HCT116 (cell line): ENCODE measurements at regions of chr5 and their contacts with region 1.

Region 1: DNA sequence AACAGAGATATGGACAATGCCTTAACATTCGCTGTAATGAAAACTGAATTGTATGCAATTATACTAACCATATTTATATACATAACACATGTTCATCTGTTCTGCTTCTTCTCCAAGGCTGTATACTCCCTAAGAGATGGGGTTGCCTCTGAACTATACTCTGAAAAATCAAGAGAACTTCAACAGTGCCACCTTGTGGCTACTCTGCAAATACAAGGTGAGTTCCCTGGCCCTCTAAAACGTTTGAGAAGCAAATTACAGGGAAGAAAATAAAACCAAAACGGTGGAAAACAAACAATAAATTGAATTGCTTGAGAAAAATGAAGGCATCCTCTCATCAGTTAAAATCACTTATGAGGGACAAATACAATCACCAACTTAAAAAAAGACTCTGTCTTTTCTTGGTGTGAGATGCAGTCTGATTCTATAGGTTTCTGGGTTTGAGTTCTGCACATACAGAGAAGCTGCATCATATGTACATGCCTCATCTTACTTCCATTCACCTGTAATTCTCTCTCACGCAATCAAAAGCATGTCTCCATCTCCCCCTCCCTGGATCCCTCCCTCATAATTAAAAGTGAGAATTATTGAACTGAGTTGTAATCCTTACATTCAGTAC is 98.6 kb downstream of the FBXW11 start:
- DNase-seq: peak; percentile 37
- ATAC-seq: peak; percentile 86
- H3K4me3 ChIP-seq: no peak overlapping the region
- H3K27ac ChIP-seq: no peak overlapping the region
- H3K4me1 ChIP-seq: no peaks in the 10 kb centered on the region
- H3K27me3 ChIP-seq: no peaks in the 10 kb centered on the region
- CTCF ChIP-seq: peak; percentile 73 to 89 (median 83)
- POLR2A ChIP-seq: no peak
- RAD21 ChIP-seq: peak; percentile 80

Region 2: DNA sequence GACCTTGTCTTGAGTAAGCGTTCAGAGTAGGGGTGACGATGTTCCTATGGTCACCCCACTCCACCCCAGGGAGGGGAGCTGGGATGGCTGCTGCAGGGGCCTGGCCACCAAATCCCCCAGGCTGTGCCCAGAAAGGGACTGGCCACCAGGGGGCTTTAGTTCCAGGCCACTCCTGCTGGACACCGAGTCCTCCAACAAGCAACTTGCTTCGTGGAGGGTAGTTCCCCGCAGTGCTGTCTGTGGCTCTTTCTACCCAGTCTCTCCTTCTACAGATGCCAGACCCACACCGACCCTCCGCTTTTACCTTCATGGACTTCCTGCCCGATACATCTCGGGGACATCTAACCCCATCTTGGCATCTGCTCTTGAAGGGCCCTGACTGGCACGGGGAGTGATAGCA is 1160.0 kb before region 1 on chr5:
- CTCF ChIA-PET with region 1: no interaction called
- POLR2A ChIA-PET with region 1: no interaction called
- RAD21 ChIA-PET with region 1: no interaction called
- intact Hi-C with region 1: loop called (anchors 10 kb)
- DNase-seq: peak; percentile 16
- ATAC-seq: peak; percentile 35; the same call in 1 of the 2 replicates
- H3K4me3 ChIP-seq: no peak overlapping the region
- H3K27ac ChIP-seq: no peak overlapping the region
- H3K4me1 ChIP-seq: peaks cover 0 to 10% of the 10 kb centered on the region in 2 experiments; a peak in 1 of 4 replicates
- H3K27me3 ChIP-seq: peaks cover 13% of the 10 kb centered on the region; the same call in 1 of the 2 replicates
- CTCF ChIP-seq: peak; percentile 40 to 68 (median 56); a peak in 5 of 6 replicates
- POLR2A ChIP-seq: no peak
- RAD21 ChIP-seq: peak; percentile 37; the same call in 1 of the 2 replicates

Region 3: DNA sequence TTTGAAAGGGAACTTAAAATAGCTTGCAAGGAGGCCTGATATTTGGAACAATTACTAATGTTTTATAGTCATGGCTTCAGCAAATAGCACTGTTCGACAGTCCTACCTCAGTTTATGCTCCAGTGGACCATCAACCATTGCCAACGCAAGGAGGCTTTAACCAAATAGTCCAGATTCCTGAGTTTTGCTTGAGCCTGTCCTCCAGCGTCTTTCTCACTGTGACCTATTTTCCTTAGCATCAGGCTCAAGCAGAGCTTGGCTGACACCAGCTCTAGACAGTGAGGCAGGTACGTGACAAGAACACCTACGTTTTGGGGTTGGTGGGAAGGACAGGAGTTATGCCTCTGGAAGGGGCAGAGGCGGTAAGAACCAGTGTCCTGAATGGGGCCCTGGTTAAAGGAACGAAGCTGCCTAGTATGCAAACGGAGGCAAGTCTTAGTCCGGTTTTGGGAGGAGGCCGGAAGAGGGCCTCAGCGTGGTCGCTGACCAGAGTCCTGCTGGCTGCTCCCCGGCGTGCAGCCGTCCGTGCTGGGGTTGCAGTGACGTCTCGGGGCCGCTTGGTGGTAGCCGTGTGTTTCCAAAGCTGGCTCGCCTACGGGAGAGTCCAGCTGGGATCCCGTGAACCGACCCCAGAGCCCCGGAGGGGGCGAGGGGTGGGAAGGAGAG is 489.4 kb before region 1 on chr5:
- CTCF ChIA-PET with region 1: interaction called, 7 read pairs
- POLR2A ChIA-PET with region 1: no interaction called
- RAD21 ChIA-PET with region 1: no interaction called
- intact Hi-C with region 1: loop called (anchors 1 kb)
- DNase-seq: peak; percentile 61
- ATAC-seq: peak; percentile 76
- H3K4me3 ChIP-seq: peak overlapping the region; percentile 42 to 58
- H3K27ac ChIP-seq: peak overlapping the region; percentile 50
- H3K4me1 ChIP-seq: peaks cover 0 to 45% of the 10 kb centered on the region in 2 experiments; a peak in 3 of 4 replicates
- H3K27me3 ChIP-seq: no peaks in the 10 kb centered on the region
- CTCF ChIP-seq: peak; percentile 86 to 90 (median 90)
- POLR2A ChIP-seq: no peak
- RAD21 ChIP-seq: peak; percentile 91

Region 4: GRCh38 chr5:172035039-172035438 is 127.2 kb after region 1 on chr5:
- CTCF ChIA-PET with region 1: interaction called, 40 read pairs
- POLR2A ChIA-PET with region 1: no interaction called
- RAD21 ChIA-PET with region 1: interaction called in 1 of 2 experiments, 4 read pairs
- intact Hi-C with region 1: loop called (anchors 1 kb)
- DNase-seq: no peak
- ATAC-seq: no peak
- H3K4me3 ChIP-seq: no peak overlapping the region
- H3K27ac ChIP-seq: no peak overlapping the region
- H3K4me1 ChIP-seq: no peaks in the 10 kb centered on the region
- H3K27me3 ChIP-seq: no peaks in the 10 kb centered on the region
- CTCF ChIP-seq: no peak
- POLR2A ChIP-seq: no peak
- RAD21 ChIP-seq: no peak

Region 5: GRCh38 chr5:172283020-172283861 is 375.4 kb after region 1 on chr5 and contains the start of gene UBTD2:
- CTCF ChIA-PET with region 1: interaction called, 4 read pairs
- POLR2A ChIA-PET with region 1: no interaction called
- RAD21 ChIA-PET with region 1: no interaction called
- intact Hi-C with region 1: loop called (anchors 1 kb)
- DNase-seq: no peak
- ATAC-seq: peak; percentile 88
- H3K4me3 ChIP-seq: peak within 1 kb of the TSS; percentile 74 to 90
- H3K27ac ChIP-seq: peak within 1 kb of the TSS; percentile 81
- H3K4me1 ChIP-seq: peaks cover 11 to 20% of the 10 kb centered on the region in 2 experiments; a peak in 3 of 4 replicates
- H3K27me3 ChIP-seq: no peaks in the 10 kb centered on the region
- CTCF ChIP-seq: peak in 1 of 3 experiments; percentile 57; a peak in 4 of 6 replicates
- POLR2A ChIP-seq: no peak
- RAD21 ChIP-seq: peak; percentile 60
- total RNA-seq, gene UBTD2: 15.9 TPM

Region 6: GRCh38 chr5:172479044-172479783 is 571.4 kb after region 1 on chr5:
- CTCF ChIA-PET with region 1: no interaction called
- POLR2A ChIA-PET with region 1: no interaction called
- RAD21 ChIA-PET with region 1: no interaction called
- intact Hi-C with region 1: no loop called
- DNase-seq: peak; percentile 81
- ATAC-seq: peak; percentile 99
- H3K4me3 ChIP-seq: no peak overlapping the region
- H3K27ac ChIP-seq: no peak overlapping the region
- H3K4me1 ChIP-seq: no peaks in the 10 kb centered on the region
- H3K27me3 ChIP-seq: no peaks in the 10 kb centered on the region
- CTCF ChIP-seq: peak; percentile 84 to 99 (median 84)
- POLR2A ChIP-seq: no peak
- RAD21 ChIP-seq: peak; percentile 95